H1 (cell line): ENCODE measurements at regions of chr19 and their contacts with region 1.

Region 1: GRCh38 chr19:45496349-45496953 is 396 bp downstream of the RTN2 start:
- DNase-seq: peak in 1 of 2 experiments; percentile 91
- H3K4me3 ChIP-seq: peak overlapping the region; percentile 53 to 83 (median 70)
- H3K27ac ChIP-seq: no peak overlapping the region
- H3K4me1 ChIP-seq: peaks cover 5 to 17% (median 15%) of the 10 kb centered on the region in 4 experiments; a peak in 6 of 7 replicates
- H3K27me3 ChIP-seq: peaks cover 0 to 10% (median 4%) of the 10 kb centered on the region in 4 experiments; a peak in 3 of 7 replicates
- CTCF ChIP-seq: no peak
- EP300 ChIP-seq: no peak
- POLR2A ChIP-seq: no peak
- RAD21 ChIP-seq: no peak

Region 2: DNA sequence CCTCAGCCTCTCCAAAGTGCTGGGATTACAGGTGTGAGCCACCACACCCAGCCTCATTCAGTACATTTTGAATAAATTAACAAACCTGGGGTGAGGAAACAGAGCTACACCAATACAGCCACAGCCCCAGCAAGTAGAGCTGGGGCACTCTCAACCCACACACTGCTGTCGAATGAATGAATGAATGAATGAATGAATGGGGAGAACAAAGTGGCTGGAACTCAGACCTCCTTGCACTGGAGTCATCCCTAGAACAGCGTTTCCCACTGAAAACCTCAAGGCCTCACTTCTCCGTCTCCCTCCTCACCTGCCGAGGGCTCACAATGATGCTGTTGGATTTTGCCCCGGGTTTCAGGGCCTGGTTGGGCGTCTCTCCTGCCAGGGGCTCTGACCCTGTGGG is 75.6 kb before region 1 on chr19:
- CTCF ChIA-PET with region 1: no interaction called
- POLR2A ChIA-PET with region 1: no interaction called
- DNase-seq: no peak
- H3K4me3 ChIP-seq: no peak overlapping the region
- H3K27ac ChIP-seq: no peak overlapping the region
- H3K4me1 ChIP-seq: peaks cover 0 to 11% (median 6%) of the 10 kb centered on the region in 4 experiments; a peak in 6 of 7 replicates
- H3K27me3 ChIP-seq: no peaks in the 10 kb centered on the region
- CTCF ChIP-seq: no peak
- EP300 ChIP-seq: no peak
- POLR2A ChIP-seq: no peak
- RAD21 ChIP-seq: no peak

Region 3: GRCh38 chr19:45469132-45469944 is 27.1 kb before region 1 on chr19:
- CTCF ChIA-PET with region 1: interaction called, 4 read pairs
- POLR2A ChIA-PET with region 1: interaction called, 16 read pairs
- DNase-seq: peak in 1 of 2 experiments; percentile 95
- H3K4me3 ChIP-seq: peak overlapping the region; percentile 48 to 95 (median 78)
- H3K27ac ChIP-seq: peak overlapping the region; percentile 87
- H3K4me1 ChIP-seq: peaks cover 0 to 22% (median 14%) of the 10 kb centered on the region in 4 experiments; a peak in 6 of 7 replicates
- H3K27me3 ChIP-seq: peaks cover 0 to 19% (median 17%) of the 10 kb centered on the region in 4 experiments; a peak in 4 of 7 replicates
- CTCF ChIP-seq: no peak
- EP300 ChIP-seq: peak in 1 of 2 experiments; percentile 73; a peak in 1 of 3 replicates
- POLR2A ChIP-seq: peak; percentile 71 to 87
- RAD21 ChIP-seq: no peak

Region 4: GRCh38 chr19:45478454-45479238 is 17.8 kb before region 1 on chr19:
- CTCF ChIA-PET with region 1: interaction called, 10 read pairs
- POLR2A ChIA-PET with region 1: interaction called, 7 read pairs
- DNase-seq: peak in 1 of 2 experiments; percentile 94
- H3K4me3 ChIP-seq: peak overlapping the region; percentile 44 to 82 (median 75); a peak in 7 of 8 replicates
- H3K27ac ChIP-seq: peak overlapping the region; percentile 97
- H3K4me1 ChIP-seq: peaks cover 2 to 5% (median 3%) of the 10 kb centered on the region in 4 experiments
- H3K27me3 ChIP-seq: no peaks in the 10 kb centered on the region; a peak in 2 of 7 replicates
- CTCF ChIP-seq: peak; percentile 87 to 93 (median 91)
- EP300 ChIP-seq: no peak
- POLR2A ChIP-seq: peak in 1 of 2 experiments; percentile 71; a peak in 2 of 3 replicates
- RAD21 ChIP-seq: peak; percentile 90

Region 5: GRCh38 chr19:45485305-45486077 is 11.0 kb before region 1 on chr19:
- CTCF ChIA-PET with region 1: interaction called, 37 read pairs
- POLR2A ChIA-PET with region 1: interaction called, 7 read pairs
- DNase-seq: peak in 1 of 2 experiments; percentile 100
- H3K4me3 ChIP-seq: peak overlapping the region; percentile 32 to 69 (median 52)
- H3K27ac ChIP-seq: no peak overlapping the region; the same call in 1 of the 2 replicates
- H3K4me1 ChIP-seq: peaks cover 0 to 3% (median 0%) of the 10 kb centered on the region in 4 experiments; a peak in 1 of 7 replicates
- H3K27me3 ChIP-seq: no peaks in the 10 kb centered on the region
- CTCF ChIP-seq: peak; percentile 86 to 95 (median 92)
- EP300 ChIP-seq: no peak
- POLR2A ChIP-seq: no peak
- RAD21 ChIP-seq: peak; percentile 59 to 66

Region 6: DNA sequence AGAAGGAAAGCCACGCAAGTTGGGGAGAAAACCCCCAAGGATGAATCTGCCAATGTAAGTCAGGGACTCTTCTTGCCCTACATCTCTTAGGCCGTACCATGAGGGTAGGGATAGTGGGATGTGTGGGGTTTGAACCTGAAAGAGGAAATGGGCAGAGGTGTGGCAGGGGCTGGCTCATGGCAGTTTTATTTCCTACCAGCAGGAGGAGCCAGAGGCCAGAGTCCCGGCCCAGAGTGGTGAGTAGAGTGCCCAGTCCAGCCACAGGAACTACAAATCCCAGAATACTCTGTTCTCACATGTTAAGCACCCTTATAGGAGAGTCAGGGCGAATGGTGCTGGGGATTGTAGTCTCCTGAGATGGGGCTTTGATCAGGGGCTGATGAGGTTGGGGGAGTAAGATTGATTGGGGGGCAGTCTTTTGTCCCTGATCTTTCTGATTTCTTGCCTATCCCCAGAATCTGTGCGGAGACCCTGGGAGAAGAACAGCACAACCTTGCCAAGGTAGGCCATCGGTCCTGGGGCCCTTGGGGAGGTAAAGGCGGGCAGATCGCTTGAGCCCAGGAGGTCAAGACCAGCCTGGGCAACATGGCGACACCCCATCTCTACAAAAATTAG is 27.3 kb after region 1 on chr19:
- CTCF ChIA-PET with region 1: interaction called, 13 read pairs
- POLR2A ChIA-PET with region 1: interaction called, 5 read pairs
- DNase-seq: peak; percentile 64 to 88
- H3K4me3 ChIP-seq: no peak overlapping the region
- H3K27ac ChIP-seq: no peak overlapping the region
- H3K4me1 ChIP-seq: peaks cover 0 to 7% (median 5%) of the 10 kb centered on the region in 4 experiments; a peak in 5 of 7 replicates
- H3K27me3 ChIP-seq: no peaks in the 10 kb centered on the region
- CTCF ChIP-seq: peak; percentile 82 to 93 (median 83)
- EP300 ChIP-seq: no peak
- POLR2A ChIP-seq: no peak
- RAD21 ChIP-seq: peak; percentile 85 to 86

Region 7: DNA sequence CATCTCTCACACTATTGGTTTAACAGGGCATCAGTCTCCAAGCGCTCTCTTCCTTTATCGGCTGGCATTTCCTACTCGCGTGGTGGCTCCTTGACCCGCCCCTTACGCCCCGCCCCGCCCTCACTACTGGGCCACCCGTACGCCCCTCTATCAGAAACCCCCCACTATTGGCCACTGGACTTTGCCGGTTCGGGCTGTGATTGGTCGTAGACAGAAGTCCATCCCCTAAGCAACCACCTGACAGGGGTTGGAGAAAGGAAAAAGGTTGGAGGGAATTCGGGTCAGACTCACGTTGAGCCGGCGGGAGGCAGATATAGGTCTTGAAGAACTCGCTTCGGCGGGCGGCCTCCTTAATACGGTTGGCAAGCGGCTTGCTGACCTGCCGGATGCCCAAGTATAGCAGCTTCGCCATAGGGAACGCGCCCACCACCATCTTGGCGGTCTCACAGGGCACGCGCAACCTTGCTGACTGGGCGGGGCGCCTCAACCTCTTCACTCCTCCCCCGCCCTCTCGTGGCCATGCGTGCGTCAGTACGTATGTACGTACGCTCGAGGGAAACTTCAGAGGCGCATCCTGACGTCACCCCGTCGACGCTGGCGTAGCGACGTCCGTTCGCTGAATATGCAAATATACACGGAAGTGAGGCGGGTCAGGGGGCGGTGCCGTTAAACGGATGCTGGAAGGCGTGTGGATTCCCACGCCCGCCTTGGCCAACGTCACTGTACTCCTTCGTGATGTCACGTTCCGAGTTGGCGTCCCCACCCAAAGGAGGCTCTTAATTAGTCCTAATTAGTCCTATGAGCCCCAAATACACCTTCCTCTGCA is 88.1 kb after region 1 on chr19 and contains the start of gene OPA3:
- CTCF ChIA-PET with region 1: no interaction called
- POLR2A ChIA-PET with region 1: no interaction called
- DNase-seq: peak; percentile 94 to 97
- H3K4me3 ChIP-seq: peak within 1 kb of the TSS; percentile 73 to 96 (median 80)
- H3K27ac ChIP-seq: peak within 1 kb of the TSS; percentile 97
- H3K4me1 ChIP-seq: no peaks in the 10 kb centered on the region; a peak in 2 of 7 replicates
- H3K27me3 ChIP-seq: no peaks in the 10 kb centered on the region
- CTCF ChIP-seq: no peak
- EP300 ChIP-seq: no peak
- POLR2A ChIP-seq: peak; percentile 79 to 93
- RAD21 ChIP-seq: no peak
- total RNA-seq, gene OPA3: 12.8 and 14.5 TPM in 2 replicates

Region 8: GRCh38 chr19:45681391-45682015 is 185.1 kb after region 1 on chr19:
- CTCF ChIA-PET with region 1: interaction called, 10 read pairs
- POLR2A ChIA-PET with region 1: no interaction called
- DNase-seq: peak in 1 of 2 experiments; percentile 95
- H3K4me3 ChIP-seq: peak overlapping the region in 3 of 4 experiments; percentile 11 to 57 (median 33); a peak in 4 of 8 replicates
- H3K27ac ChIP-seq: no peak overlapping the region
- H3K4me1 ChIP-seq: peaks cover 0 to 9% (median 5%) of the 10 kb centered on the region in 4 experiments; a peak in 5 of 7 replicates
- H3K27me3 ChIP-seq: peaks cover 0 to 8% (median 0%) of the 10 kb centered on the region in 4 experiments; a peak in 4 of 7 replicates
- CTCF ChIP-seq: peak; percentile 81 to 96 (median 91)
- EP300 ChIP-seq: peak in 1 of 2 experiments; percentile 70; a peak in 1 of 3 replicates
- POLR2A ChIP-seq: no peak
- RAD21 ChIP-seq: peak; percentile 64 to 75